OCI-LY7 (cell line): ENCODE measurements at regions of chr3 and their contacts with region 1.

Region 1: GRCh38 chr3:38204599-38205471 is 39.5 kb downstream of the OXSR1 start:
- DNase-seq: no peak
- H3K4me3 ChIP-seq: no peak overlapping the region
- H3K27ac ChIP-seq: no peak overlapping the region
- H3K4me1 ChIP-seq: no peaks in the 10 kb centered on the region
- CTCF ChIP-seq: no peak

Region 2: GRCh38 chr3:38017442-38018295 is 187.2 kb before region 1 on chr3:
- CTCF ChIA-PET with region 1: no interaction called
- POLR2A ChIA-PET with region 1: no interaction called
- intact Hi-C with region 1: no loop called
- DNase-seq: no peak
- H3K4me3 ChIP-seq: no peak overlapping the region
- H3K27ac ChIP-seq: no peak overlapping the region
- H3K4me1 ChIP-seq: no peaks in the 10 kb centered on the region
- CTCF ChIP-seq: no peak

Region 3: DNA sequence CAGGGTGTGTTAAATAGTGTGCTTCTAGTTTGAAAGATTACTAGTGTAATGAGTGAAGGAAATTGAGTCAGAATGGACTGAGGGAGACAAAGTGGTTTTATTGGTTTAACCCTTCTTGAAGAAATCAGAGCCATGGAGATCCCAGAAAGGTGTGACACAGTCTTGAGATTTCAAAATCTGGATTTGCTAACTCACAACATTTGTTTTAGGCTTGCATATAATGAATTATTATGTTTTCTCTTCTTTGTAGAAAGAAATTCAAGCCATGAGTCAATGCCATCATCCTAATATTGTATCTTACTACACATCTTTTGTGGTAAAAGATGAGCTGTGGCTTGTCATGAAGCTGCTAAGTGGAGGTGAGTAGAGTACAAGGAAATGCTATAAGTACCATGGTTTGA is 14.4 kb before region 1 on chr3:
- CTCF ChIA-PET with region 1: interaction called, 13 read pairs
- POLR2A ChIA-PET with region 1: interaction called, 4 read pairs
- intact Hi-C with region 1: no loop called
- DNase-seq: no peak
- H3K4me3 ChIP-seq: no peak overlapping the region
- H3K27ac ChIP-seq: no peak overlapping the region
- H3K4me1 ChIP-seq: no peaks in the 10 kb centered on the region
- CTCF ChIP-seq: no peak